ENCODE measurements at regions of chr1 and their contacts with region 1.

Region 1: DNA sequence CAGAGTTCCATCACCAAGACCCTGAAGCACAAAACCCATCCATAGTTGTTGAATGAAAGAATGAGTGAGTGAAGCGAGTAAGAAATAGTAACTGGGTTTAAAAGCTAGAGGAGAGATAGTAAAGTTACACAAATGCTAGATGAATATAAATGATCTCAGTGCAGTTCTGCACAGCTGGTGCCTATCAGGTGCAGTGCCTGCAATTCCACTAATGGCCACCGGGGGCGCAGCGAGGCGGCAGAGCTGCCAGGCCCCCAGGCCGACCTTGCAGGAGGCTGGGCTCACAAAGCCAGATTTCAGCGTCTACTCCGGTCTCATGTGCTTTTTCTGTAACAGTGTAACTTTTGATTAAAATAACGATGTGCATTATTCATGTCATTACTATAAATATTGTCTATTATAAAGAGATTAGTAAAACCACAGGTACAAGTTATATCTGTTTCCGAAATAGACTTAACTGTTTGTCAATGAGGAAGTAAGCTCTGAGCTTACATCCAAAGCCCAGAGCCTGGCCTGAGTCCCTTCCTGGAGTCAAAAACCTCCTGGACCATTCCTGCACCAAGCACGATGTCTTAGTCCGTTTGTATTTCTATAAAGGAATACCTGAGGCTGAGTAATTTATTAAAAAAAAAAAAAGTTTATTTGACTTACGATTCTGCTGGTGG is 477.6 kb downstream of the NPHP4 start:
- DNase-seq: peak; percentile 24
- H3K4me3 ChIP-seq: no peak overlapping the region
- H3K27ac ChIP-seq: no peak overlapping the region
- H3K4me1 ChIP-seq: no peaks in the 10 kb centered on the region
- H3K27me3 ChIP-seq: no peaks in the 10 kb centered on the region
- CTCF ChIP-seq: peak; percentile 92 to 98
- POLR2A ChIP-seq: no peak

Region 2: GRCh38 chr1:5311634-5312292 is 202.9 kb before region 1 on chr1:
- CTCF ChIA-PET with region 1: no interaction called
- POLR2A ChIA-PET with region 1: no interaction called
- dilution Hi-C with region 1: no loop called
- intact Hi-C with region 1: no loop called
- DNase-seq: no peak
- H3K4me3 ChIP-seq: no peak overlapping the region
- H3K27ac ChIP-seq: no peak overlapping the region
- H3K4me1 ChIP-seq: no peaks in the 10 kb centered on the region
- H3K27me3 ChIP-seq: no peaks in the 10 kb centered on the region
- CTCF ChIP-seq: no peak
- POLR2A ChIP-seq: no peak

Region 3: GRCh38 chr1:5354681-5355080 is 160.0 kb before region 1 on chr1:
- CTCF ChIA-PET with region 1: no interaction called
- POLR2A ChIA-PET with region 1: no interaction called
- dilution Hi-C with region 1: no loop called
- intact Hi-C with region 1: no loop called
- DNase-seq: no peak
- H3K4me3 ChIP-seq: no peak overlapping the region
- H3K27ac ChIP-seq: no peak overlapping the region
- H3K4me1 ChIP-seq: no peaks in the 10 kb centered on the region
- H3K27me3 ChIP-seq: no peaks in the 10 kb centered on the region
- CTCF ChIP-seq: no peak
- POLR2A ChIP-seq: no peak

Region 4: DNA sequence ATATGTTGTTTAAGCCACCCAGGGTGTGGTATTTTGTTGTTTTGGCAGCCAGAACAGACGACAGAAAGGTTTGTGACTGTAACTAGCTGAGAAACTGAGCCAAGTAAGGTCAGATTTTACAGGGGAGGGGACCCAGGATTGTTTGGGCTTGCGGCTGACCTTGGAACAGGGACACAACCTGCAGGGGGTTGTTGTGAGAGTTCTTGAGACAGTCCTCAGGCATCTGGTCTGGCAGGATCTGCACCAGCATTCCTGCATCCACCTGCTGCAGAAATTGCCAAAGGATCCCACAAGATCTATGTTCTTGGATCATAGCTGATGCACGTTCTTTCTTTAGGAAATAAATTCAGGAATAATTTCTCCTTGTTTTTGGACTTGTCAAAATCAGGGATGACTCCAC is 22.1 kb after region 1 on chr1:
- CTCF ChIA-PET with region 1: no interaction called
- POLR2A ChIA-PET with region 1: no interaction called
- dilution Hi-C with region 1: no loop called
- intact Hi-C with region 1: no loop called
- DNase-seq: no peak
- H3K4me3 ChIP-seq: no peak overlapping the region
- H3K27ac ChIP-seq: no peak overlapping the region
- H3K4me1 ChIP-seq: no peaks in the 10 kb centered on the region
- H3K27me3 ChIP-seq: no peaks in the 10 kb centered on the region
- CTCF ChIP-seq: no peak
- POLR2A ChIP-seq: no peak

Region 5: GRCh38 chr1:5745776-5746610 is 231.3 kb after region 1 on chr1:
- CTCF ChIA-PET with region 1: no interaction called
- POLR2A ChIA-PET with region 1: no interaction called
- dilution Hi-C with region 1: no loop called
- intact Hi-C with region 1: loop called (anchors 1 kb)
- DNase-seq: peak; percentile 20
- H3K4me3 ChIP-seq: no peak overlapping the region
- H3K27ac ChIP-seq: no peak overlapping the region
- H3K4me1 ChIP-seq: no peaks in the 10 kb centered on the region
- H3K27me3 ChIP-seq: no peaks in the 10 kb centered on the region
- CTCF ChIP-seq: peak; percentile 78 to 84
- POLR2A ChIP-seq: no peak

Region 6: DNA sequence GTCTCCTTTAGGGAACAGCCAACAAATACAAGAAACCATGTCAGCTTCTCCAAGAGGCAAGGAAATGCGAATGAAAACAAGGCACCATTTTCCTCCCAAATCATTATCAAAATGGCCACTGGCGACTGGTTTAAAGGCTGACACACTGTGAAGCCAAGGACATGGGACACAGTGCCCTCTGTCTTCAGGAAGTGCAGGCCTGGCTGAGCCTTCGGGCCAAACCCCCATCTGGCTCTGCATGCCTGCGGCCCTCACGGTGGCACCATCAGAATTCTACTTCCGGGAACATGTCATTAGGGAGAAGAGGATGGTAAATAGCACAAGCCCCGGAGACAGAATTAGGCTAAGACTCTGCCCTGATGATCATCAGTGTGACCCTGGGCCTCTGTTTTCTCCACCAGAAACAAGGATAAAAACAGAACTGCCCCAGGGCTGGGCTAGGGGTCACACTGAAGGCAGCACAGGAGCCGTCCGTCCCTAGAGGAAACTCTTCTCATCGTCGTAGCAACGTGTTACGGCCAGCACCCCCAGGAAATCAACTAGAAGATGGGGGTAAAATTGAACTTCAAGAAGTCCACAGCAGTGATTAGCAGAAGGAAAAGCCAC is 374.1 kb after region 1 on chr1:
- CTCF ChIA-PET with region 1: interaction called, 6 read pairs
- POLR2A ChIA-PET with region 1: no interaction called
- dilution Hi-C with region 1: no loop called
- intact Hi-C with region 1: loop called (anchors 1 kb)
- DNase-seq: no peak
- H3K4me3 ChIP-seq: no peak overlapping the region
- H3K27ac ChIP-seq: no peak overlapping the region
- H3K4me1 ChIP-seq: no peaks in the 10 kb centered on the region
- H3K27me3 ChIP-seq: no peaks in the 10 kb centered on the region
- CTCF ChIP-seq: no peak
- POLR2A ChIP-seq: no peak

Region 7: GRCh38 chr1:5915587-5916571 is 401.2 kb after region 1 on chr1:
- CTCF ChIA-PET with region 1: interaction called, 45 read pairs
- POLR2A ChIA-PET with region 1: no interaction called
- dilution Hi-C with region 1: no loop called
- intact Hi-C with region 1: loop called (anchors 1 kb)
- DNase-seq: peak; percentile 40
- H3K4me3 ChIP-seq: no peak overlapping the region
- H3K27ac ChIP-seq: no peak overlapping the region
- H3K4me1 ChIP-seq: no peaks in the 10 kb centered on the region
- H3K27me3 ChIP-seq: no peaks in the 10 kb centered on the region
- CTCF ChIP-seq: peak; percentile 46 to 61
- POLR2A ChIP-seq: no peak

Region 8: GRCh38 chr1:5975133-5975880 is 460.7 kb after region 1 on chr1:
- CTCF ChIA-PET with region 1: interaction called, 69 read pairs
- POLR2A ChIA-PET with region 1: no interaction called
- dilution Hi-C with region 1: no loop called
- intact Hi-C with region 1: no loop called
- DNase-seq: peak; percentile 57
- H3K4me3 ChIP-seq: no peak overlapping the region
- H3K27ac ChIP-seq: no peak overlapping the region
- H3K4me1 ChIP-seq: no peaks in the 10 kb centered on the region
- H3K27me3 ChIP-seq: no peaks in the 10 kb centered on the region
- CTCF ChIP-seq: peak; percentile 71 to 90
- POLR2A ChIP-seq: no peak

Region 9: DNA sequence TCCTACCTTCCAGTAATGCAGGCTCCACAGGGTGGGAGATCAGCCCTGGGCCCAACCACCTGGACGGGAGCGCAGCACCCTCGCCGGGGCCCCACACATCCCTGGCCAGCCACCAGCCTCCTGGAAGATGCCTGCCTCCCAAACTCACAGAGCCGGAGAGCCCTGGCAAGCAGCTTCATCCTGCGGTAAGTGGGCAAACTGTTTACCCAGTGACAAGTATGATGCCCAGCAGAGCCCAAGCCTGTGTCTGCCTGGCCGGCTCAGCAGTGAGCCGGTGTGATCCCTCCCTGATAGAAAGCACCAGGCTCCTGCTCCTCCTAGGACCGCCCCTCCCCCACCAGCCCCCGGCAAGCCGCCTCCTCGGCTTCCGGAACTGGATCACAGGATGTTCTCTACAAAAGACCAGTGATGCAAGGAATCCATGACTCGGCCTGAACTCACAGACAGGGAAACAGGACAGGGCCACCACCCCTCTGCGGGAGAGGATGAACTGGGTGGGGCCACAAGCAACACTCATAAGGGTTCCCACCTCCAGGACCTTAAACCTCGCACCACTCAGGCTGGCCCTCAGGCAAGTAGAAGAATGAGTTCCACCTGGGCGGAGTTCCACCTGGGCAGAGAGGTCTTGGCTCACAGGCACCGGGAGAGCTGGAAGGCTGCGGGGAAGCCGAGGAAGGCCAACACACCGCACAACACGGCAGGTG is 871.0 kb after region 1 on chr1:
- CTCF ChIA-PET with region 1: no interaction called
- POLR2A ChIA-PET with region 1: no interaction called
- dilution Hi-C with region 1: no loop called
- intact Hi-C with region 1: no loop called
- DNase-seq: peak; percentile 48
- H3K4me3 ChIP-seq: no peak overlapping the region
- H3K27ac ChIP-seq: peak overlapping the region; percentile 62
- H3K4me1 ChIP-seq: peaks cover 12% of the 10 kb centered on the region
- H3K27me3 ChIP-seq: no peaks in the 10 kb centered on the region
- CTCF ChIP-seq: no peak
- POLR2A ChIP-seq: no peak